Activated CD4-positive, alpha-beta memory T cell treated with anti-CD3 and anti-CD28 coated beads for 36 hours (primary cell): ENCODE measurements at regions of chr9 and their contacts with region 1.

Region 1: DNA sequence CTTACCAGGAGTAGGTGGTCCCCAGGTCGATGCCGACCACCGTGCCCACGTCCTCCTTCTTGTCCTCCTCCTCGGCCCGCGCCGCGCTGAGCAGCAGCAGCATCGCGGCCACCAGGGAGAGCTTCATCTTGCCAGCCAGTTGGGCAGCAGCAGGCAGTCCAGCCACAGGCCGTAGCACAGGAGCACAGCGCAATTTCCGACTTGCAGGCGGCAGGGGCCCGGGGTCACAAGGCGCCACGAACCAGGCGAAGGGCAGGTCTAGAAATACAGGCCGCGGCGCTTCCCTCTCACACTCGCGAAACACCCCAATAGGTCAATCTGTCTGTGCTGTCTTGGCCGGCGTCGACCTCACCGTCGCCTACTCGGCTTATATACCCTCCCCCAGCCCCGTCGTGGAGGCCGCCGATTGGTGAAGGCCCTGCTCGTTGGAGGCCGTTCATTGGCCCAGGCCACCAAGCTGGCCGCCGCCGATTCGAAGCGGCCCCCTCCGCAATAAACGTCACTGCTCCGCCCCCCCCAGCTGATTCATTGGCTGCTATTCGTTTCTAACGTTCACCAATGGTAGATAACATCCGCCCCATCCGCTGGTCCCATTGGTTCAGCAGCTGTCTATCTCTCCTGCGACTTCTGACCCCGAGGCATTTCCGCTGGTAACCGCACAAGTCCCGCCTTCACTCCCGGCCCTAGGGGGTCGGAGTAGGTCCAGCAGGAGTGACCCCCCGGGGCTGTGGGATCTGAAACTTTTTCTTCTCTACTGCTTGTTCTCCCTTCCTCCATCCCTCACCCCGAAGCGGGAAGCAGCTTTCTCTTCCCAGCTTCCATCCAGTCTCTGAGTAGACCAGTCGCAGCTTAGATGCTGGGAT is at the start of gene HSPA5:
- DNase-seq: peak; percentile 100
- H3K4me3 Mint-ChIP-seq: peak within 1 kb of the TSS; percentile 94
- H3K27ac Mint-ChIP-seq: peak within 1 kb of the TSS; percentile 98
- H3K4me1 Mint-ChIP-seq: peaks cover 46% of the 10 kb centered on the region
- H3K27me3 Mint-ChIP-seq: peaks cover 2% of the 10 kb centered on the region
- total RNA-seq, gene HSPA5: 169 to 170 TPM

Region 2: DNA sequence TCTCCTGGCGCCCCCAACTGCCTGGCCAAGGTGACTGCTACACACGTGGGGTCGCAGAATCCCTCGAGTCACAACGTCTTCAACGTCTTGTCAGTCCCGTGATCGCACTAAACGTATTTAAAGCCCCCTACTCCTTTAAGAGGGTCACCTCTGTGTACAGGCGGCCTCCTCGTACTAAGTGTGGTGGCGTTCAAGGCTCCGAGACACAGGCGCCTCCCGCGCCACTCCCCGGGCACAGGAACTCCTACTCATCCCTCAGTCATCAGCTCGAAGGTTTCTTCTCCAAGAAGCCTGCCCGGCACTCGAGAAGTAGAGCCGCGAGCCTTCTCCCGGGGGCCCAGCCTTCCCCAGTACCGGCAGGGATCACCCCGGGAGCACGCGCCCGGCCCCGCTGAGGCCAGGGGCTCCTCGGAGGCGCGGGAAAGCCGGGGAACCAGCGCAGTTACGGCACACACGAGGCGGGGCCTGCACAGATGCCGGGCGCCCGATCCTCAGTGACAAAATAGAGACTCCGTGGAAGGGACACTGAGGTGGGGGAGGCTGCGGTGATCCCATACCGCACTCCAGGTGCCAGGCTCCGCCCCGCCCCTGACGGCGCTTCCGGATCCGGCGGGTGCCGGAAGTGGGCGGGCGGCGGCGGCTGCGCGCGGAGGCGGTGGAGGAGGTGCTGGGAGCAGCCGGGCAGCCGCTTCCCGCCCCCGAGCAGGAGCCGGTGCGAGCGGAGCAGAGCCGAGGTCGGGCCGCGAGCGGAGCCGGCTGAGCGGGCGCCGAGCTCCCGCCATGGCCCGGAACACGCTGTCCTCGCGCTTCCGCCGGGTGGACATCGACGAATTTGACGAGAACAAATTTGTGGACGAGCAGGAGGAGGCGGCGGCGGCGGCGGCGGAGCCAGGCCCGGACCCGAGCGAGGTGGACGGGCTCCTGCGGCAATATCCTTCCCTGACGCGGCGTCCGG is 372.4 kb before region 1 on chr9:
- CTCF ChIA-PET with region 1: no interaction called
- POLR2A ChIA-PET with region 1: interaction called, 13 read pairs
- intact Hi-C with region 1: loop called (anchors 1 kb)
- DNase-seq: peak; percentile 92
- H3K4me3 Mint-ChIP-seq: peak overlapping the region; percentile 81
- H3K27ac Mint-ChIP-seq: peak overlapping the region; percentile 100
- H3K4me1 Mint-ChIP-seq: peaks cover 45% of the 10 kb centered on the region
- H3K27me3 Mint-ChIP-seq: peaks cover 1% of the 10 kb centered on the region

Region 3: DNA sequence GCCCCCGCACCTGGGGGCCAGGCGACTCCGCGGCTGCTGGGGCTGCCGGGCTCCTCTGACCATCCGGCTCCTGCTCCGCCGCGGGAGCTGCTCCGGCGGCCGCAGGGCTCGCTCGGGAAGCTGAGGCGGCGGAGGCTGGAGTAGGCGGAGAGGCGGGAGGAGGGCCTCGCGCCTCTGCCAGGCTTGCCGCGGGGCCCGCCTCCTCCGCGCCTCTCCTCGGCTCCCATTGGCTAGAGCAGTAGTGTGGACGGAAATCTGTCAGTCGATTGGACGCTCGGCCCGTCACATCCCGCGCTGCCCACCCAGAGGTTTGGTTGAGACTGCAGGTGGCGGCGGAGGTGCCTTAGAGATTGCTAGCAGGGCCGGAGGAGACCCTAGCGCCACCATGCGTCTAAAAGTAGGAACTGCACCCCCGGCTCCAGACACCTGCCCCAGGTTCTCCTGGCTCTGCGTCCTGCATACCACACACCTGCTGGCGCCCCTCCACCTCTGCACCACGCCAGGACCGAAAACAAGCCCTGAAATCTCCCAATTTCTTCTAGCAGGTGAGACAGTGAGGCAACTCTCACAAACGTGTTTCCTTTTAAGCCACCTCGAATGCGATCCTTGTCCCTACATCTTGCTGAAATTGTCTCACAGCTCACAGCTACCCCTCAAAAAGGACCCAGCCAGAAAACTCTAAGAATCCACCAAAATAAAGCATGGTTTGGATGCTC is 97.7 kb before region 1 on chr9 and contains the start of gene SCAI:
- CTCF ChIA-PET with region 1: no interaction called
- POLR2A ChIA-PET with region 1: no interaction called
- intact Hi-C with region 1: loop called (anchors 1 kb)
- DNase-seq: peak; percentile 99
- H3K4me3 Mint-ChIP-seq: peak within 1 kb of the TSS; percentile 82
- H3K27ac Mint-ChIP-seq: peak within 1 kb of the TSS; percentile 24
- H3K4me1 Mint-ChIP-seq: peaks cover 31% of the 10 kb centered on the region
- H3K27me3 Mint-ChIP-seq: no peaks in the 10 kb centered on the region
- total RNA-seq, gene SCAI: 9.0 to 10.8 TPM

Region 4: GRCh38 chr9:125200210-125201047 is 40.8 kb before region 1 on chr9 and contains the start of gene RABEPK:
- CTCF ChIA-PET with region 1: no interaction called
- POLR2A ChIA-PET with region 1: interaction called, 8 read pairs
- intact Hi-C with region 1: loop called (anchors 1 kb)
- DNase-seq: peak; percentile 94
- H3K4me3 Mint-ChIP-seq: peak within 1 kb of the TSS; percentile 90
- H3K27ac Mint-ChIP-seq: peak within 1 kb of the TSS; percentile 84
- H3K4me1 Mint-ChIP-seq: peaks cover 34% of the 10 kb centered on the region
- H3K27me3 Mint-ChIP-seq: no peaks in the 10 kb centered on the region
- total RNA-seq, gene RABEPK: 20.7 to 21.9 TPM

Region 5: GRCh38 chr9:125317704-125318103 is 76.5 kb after region 1 on chr9:
- CTCF ChIA-PET with region 1: no interaction called
- POLR2A ChIA-PET with region 1: no interaction called
- intact Hi-C with region 1: no loop called
- DNase-seq: no peak
- H3K4me3 Mint-ChIP-seq: no peak overlapping the region
- H3K27ac Mint-ChIP-seq: no peak overlapping the region
- H3K4me1 Mint-ChIP-seq: no peaks in the 10 kb centered on the region
- H3K27me3 Mint-ChIP-seq: no peaks in the 10 kb centered on the region

Region 6: GRCh38 chr9:125332527-125332926 is 91.3 kb after region 1 on chr9:
- CTCF ChIA-PET with region 1: interaction called, 4 read pairs
- POLR2A ChIA-PET with region 1: interaction called, 5 read pairs
- intact Hi-C with region 1: loop called (anchors 1 kb)
- DNase-seq: peak; percentile 69
- H3K4me3 Mint-ChIP-seq: no peak overlapping the region
- H3K27ac Mint-ChIP-seq: peak overlapping the region; percentile 7
- H3K4me1 Mint-ChIP-seq: peaks cover 16% of the 10 kb centered on the region
- H3K27me3 Mint-ChIP-seq: no peaks in the 10 kb centered on the region

Region 7: GRCh38 chr9:125568621-125569020 is 327.4 kb after region 1 on chr9:
- CTCF ChIA-PET with region 1: no interaction called
- POLR2A ChIA-PET with region 1: no interaction called
- intact Hi-C with region 1: no loop called
- DNase-seq: no peak
- H3K4me3 Mint-ChIP-seq: no peak overlapping the region
- H3K27ac Mint-ChIP-seq: no peak overlapping the region
- H3K4me1 Mint-ChIP-seq: peaks cover 4% of the 10 kb centered on the region
- H3K27me3 Mint-ChIP-seq: no peaks in the 10 kb centered on the region